WTC11 (cell line): ENCODE measurements at regions of chr12 and their contacts with region 1.

Region 1: GRCh38 chr12:49121047-49121696 is 10.0 kb downstream of the TUBA1B start:
- DNase-seq: peak; percentile 45
- ATAC-seq: peak; percentile 93
- H3K4me3 Mint-ChIP-seq: no peak overlapping the region
- H3K27ac Mint-ChIP-seq: no peak overlapping the region
- H3K4me1 Mint-ChIP-seq: no peaks in the 10 kb centered on the region
- H3K27me3 Mint-ChIP-seq: peaks cover 9% of the 10 kb centered on the region
- CTCF ChIP-seq: no peak

Region 2: GRCh38 chr12:48924617-48925303 is 196.4 kb before region 1 on chr12:
- CTCF ChIA-PET with region 1: no interaction called
- POLR2A ChIA-PET with region 1: no interaction called
- DNase-seq: peak; percentile 69
- ATAC-seq: peak; percentile 69
- H3K4me3 Mint-ChIP-seq: peak overlapping the region; percentile 82
- H3K27ac Mint-ChIP-seq: peak overlapping the region; percentile 80
- H3K4me1 Mint-ChIP-seq: peaks cover 15% of the 10 kb centered on the region
- H3K27me3 Mint-ChIP-seq: no peaks in the 10 kb centered on the region; the same call in 1 of the 2 replicates
- CTCF ChIP-seq: 0 out of 2 replicates have a peak, but pooled peaks have one; percentile 15

Region 3: DNA sequence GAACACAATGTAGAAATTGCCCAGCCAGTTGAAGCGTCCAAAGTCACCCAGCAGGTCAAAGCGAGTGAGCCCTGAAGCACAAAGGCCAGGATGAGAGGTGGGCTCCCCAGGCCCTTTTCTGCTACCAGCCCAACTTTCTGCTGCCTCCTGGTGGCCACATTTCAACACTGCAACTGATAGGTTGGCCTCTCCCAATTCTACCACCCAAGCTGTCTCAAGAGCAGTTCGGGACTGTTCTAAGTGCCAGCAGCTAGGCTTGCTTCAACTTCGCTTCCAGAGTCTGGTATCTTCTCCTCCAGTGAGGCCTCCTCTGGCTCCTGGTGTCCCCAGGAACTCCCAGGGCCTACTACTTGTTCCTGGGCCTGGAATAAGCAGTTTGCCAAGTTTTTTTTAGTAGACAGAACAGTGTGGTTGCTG is 23.1 kb before region 1 on chr12:
- CTCF ChIA-PET with region 1: interaction called, 30 read pairs
- POLR2A ChIA-PET with region 1: interaction called, 4 read pairs
- DNase-seq: peak; percentile 87
- ATAC-seq: peak; percentile 73
- H3K4me3 Mint-ChIP-seq: no peak overlapping the region
- H3K27ac Mint-ChIP-seq: no peak overlapping the region
- H3K4me1 Mint-ChIP-seq: peaks cover 21% of the 10 kb centered on the region
- H3K27me3 Mint-ChIP-seq: peaks cover 29% of the 10 kb centered on the region
- CTCF ChIP-seq: peak; percentile 92

Region 4: DNA sequence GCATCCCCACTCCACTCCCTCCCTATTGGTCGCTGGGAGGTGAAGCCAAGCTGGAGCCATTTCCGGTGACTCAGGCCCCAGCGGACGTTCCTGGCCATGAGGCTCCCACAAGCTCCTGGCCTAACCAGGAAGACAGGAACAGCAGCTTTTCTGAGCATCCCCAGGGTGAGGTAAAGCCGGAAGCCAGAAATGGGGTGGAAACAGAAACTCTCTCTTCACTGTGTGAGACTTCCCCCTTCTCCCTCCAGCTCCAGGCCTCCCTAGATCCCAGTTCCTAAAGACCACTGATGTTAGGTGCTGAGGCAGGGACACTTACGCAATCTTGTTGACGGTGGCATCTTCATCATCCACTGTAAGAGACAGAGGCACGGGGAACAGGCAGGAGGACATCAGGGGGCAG is 15.6 kb before region 1 on chr12:
- CTCF ChIA-PET with region 1: interaction called, 60 read pairs
- POLR2A ChIA-PET with region 1: interaction called, 8 read pairs
- DNase-seq: no peak
- ATAC-seq: no peak
- H3K4me3 Mint-ChIP-seq: no peak overlapping the region
- H3K27ac Mint-ChIP-seq: no peak overlapping the region
- H3K4me1 Mint-ChIP-seq: peaks cover 25% of the 10 kb centered on the region
- H3K27me3 Mint-ChIP-seq: no peaks in the 10 kb centered on the region
- CTCF ChIP-seq: no peak

Region 5: GRCh38 chr12:49110464-49111155 is 10.6 kb before region 1 on chr12 and contains the start of gene LMBR1L:
- CTCF ChIA-PET with region 1: interaction called, 60 read pairs
- POLR2A ChIA-PET with region 1: interaction called, 8 read pairs
- DNase-seq: peak; percentile 97
- ATAC-seq: peak; percentile 96
- H3K4me3 Mint-ChIP-seq: peak within 1 kb of the TSS; percentile 96
- H3K27ac Mint-ChIP-seq: peak within 1 kb of the TSS; percentile 98
- H3K4me1 Mint-ChIP-seq: peaks cover 29% of the 10 kb centered on the region
- H3K27me3 Mint-ChIP-seq: peaks cover 4% of the 10 kb centered on the region
- CTCF ChIP-seq: no peak
- total RNA-seq, gene LMBR1L: 52.8 to 78.2 TPM (median 53.1 TPM) in 3 replicates

Region 6: DNA sequence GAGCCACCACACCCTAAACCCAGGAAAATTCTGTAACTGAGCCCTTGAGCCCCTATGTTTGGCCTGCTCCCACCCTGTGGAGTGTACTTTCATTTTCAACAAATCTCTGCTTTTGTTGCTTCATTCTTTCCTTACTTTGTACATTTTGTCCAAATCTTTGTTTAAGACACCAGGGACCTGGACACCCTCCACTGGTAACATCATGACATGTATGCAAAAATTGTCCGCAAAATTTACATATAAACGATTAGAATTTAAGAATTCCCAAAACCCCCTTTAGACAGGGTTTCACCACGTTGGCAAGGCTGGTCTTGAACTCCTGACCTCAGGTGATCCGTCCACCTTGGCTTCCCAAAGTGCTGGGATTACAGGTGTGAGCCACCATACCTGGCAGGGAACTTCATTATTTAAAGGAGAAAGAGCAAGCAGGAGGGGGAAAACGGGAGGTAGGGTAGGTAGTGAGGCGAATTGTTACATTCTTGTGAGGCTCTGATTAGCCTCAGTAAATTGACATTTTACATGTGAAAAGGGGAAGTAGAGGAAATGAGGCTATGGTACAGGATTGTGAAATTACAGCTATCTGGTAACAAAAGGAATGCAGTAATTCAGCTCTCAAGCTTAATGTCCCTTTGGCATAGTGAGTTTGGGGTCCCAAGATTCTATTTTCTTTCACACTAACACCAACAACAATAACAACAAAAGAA is 40.1 kb after region 1 on chr12:
- CTCF ChIA-PET with region 1: no interaction called
- POLR2A ChIA-PET with region 1: no interaction called
- DNase-seq: no peak
- ATAC-seq: no peak
- H3K4me3 Mint-ChIP-seq: no peak overlapping the region
- H3K27ac Mint-ChIP-seq: no peak overlapping the region
- H3K4me1 Mint-ChIP-seq: 0 out of 2 replicates have a peak, but pooled peaks cover 7% of the 10 kb centered on the region
- H3K27me3 Mint-ChIP-seq: no peaks in the 10 kb centered on the region
- CTCF ChIP-seq: no peak

Region 7: GRCh38 chr12:49232940-49233841 is 112.0 kb after region 1 on chr12:
- CTCF ChIA-PET with region 1: interaction called, 10 read pairs
- POLR2A ChIA-PET with region 1: no interaction called
- DNase-seq: peak; percentile 62
- ATAC-seq: peak; percentile 34
- H3K4me3 Mint-ChIP-seq: peak overlapping the region; percentile 38
- H3K27ac Mint-ChIP-seq: no peak overlapping the region
- H3K4me1 Mint-ChIP-seq: peaks cover 27% of the 10 kb centered on the region
- H3K27me3 Mint-ChIP-seq: peaks cover 6% of the 10 kb centered on the region; the same call in 1 of the 2 replicates
- CTCF ChIP-seq: no peak